ENCODE measurements at regions of chr3 and their contacts with region 1.

Region 1: DNA sequence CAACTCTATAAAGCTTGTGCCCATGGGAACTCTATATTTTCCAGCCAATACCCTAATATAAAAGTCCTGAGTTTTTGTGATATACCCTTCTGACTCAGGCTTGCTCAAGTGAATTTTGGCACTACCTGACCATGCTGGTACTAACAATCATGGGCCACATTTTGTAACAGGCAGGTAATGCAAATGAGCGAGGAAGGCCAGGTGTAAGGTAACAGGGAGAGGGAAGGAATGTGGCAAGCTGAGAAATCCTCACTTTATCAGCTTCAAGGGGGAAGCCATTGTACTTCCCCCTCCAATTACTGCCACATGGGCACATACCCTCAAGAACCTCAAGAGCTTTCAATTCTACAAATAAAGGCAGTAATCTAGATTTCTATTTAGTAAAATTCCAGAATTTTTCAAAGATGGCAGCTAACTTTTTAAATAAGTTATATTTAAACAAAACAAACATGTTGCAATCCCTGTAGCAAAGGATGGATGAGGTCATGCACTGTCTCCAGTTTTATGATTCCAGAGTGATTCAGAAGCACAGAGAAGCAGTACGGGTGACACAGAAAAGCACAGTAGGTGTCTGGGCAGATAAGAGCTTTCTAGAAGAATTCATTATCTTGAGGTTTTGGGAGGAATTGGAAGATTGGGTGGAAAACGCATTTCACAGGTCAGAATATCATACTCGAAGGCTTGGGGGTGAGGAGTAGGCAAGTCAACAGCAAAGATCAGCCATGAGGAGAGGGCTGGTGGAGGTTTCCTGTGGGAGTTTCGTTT is 87.6 kb downstream of the FOXP1 start:
- DNase-seq: peak in 2 of 35 experiments; percentile 7 to 61
- ATAC-seq: peak in 1 of 4 experiments; percentile 33
- H3K4me3 ChIP-seq: peak overlapping the region in 1 of 2 donors; percentile 27
- H3K4me3 Mint-ChIP-seq: peak overlapping the region; percentile 61 to 74 (median 69)
- H3K27ac ChIP-seq: peak overlapping the region; percentile 98
- H3K27ac Mint-ChIP-seq: peak overlapping the region; percentile 92 to 98
- H3K4me1 ChIP-seq: peaks cover 46 to 58% of the 10 kb centered on the region in 2 experiments
- H3K4me1 Mint-ChIP-seq: peaks cover 86 to 89% (median 86%) of the 10 kb centered on the region in 3 donors
- H3K27me3 ChIP-seq: no peaks in the 10 kb centered on the region
- H3K27me3 Mint-ChIP-seq: no peaks in the 10 kb centered on the region

Region 2: GRCh38 chr3:70646628-70647027 is 849.3 kb before region 1 on chr3:
- CTCF ChIA-PET with region 1: no interaction called
- POLR2A ChIA-PET with region 1: no interaction called
- DNase-seq: no peak
- ATAC-seq: no peak
- H3K4me3 ChIP-seq: no peak overlapping the region
- H3K4me3 Mint-ChIP-seq: no peak overlapping the region
- H3K27ac ChIP-seq: no peak overlapping the region
- H3K27ac Mint-ChIP-seq: no peak overlapping the region
- H3K4me1 ChIP-seq: no peaks in the 10 kb centered on the region
- H3K4me1 Mint-ChIP-seq: no peaks in the 10 kb centered on the region
- H3K27me3 ChIP-seq: no peaks in the 10 kb centered on the region
- H3K27me3 Mint-ChIP-seq: peaks cover 11 to 34% of the 10 kb centered on the region in 2 donors

Region 3: GRCh38 chr3:71258116-71258515 is 237.8 kb before region 1 on chr3:
- CTCF ChIA-PET with region 1: no interaction called
- POLR2A ChIA-PET with region 1: no interaction called
- DNase-seq: no peak
- ATAC-seq: peak in 3 of 4 experiments; percentile 9 to 43 (median 33)
- H3K4me3 ChIP-seq: no peak overlapping the region
- H3K4me3 Mint-ChIP-seq: peak overlapping the region in 1 of 3 donors; percentile 33
- H3K27ac ChIP-seq: no peak overlapping the region
- H3K27ac Mint-ChIP-seq: peak overlapping the region; percentile 7 to 13
- H3K4me1 ChIP-seq: peaks cover 0 to 12% of the 10 kb centered on the region in 2 experiments
- H3K4me1 Mint-ChIP-seq: peaks cover 65 to 76% (median 73%) of the 10 kb centered on the region in 3 donors
- H3K27me3 ChIP-seq: no peaks in the 10 kb centered on the region
- H3K27me3 Mint-ChIP-seq: no peaks in the 10 kb centered on the region

Region 4: DNA sequence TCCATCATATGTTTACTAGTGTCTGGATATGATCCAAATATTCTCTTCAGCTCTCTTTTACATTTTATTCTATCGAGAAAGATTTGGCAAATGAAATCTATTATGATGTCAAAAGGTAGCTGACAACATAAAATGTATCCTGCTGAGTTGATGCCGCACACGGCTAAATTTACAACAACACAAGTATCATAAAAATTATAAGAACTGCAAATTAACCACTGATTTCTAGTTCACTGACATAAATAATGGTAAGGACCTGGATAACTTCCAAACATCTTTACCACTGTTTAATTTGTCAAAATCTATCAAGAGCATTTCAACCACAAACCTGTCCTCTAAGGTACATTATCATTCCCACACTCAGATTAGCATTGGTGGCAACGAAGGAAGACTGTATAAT is 156.8 kb before region 1 on chr3:
- CTCF ChIA-PET with region 1: interaction called in 1 of 2 experiments, 3 read pairs
- POLR2A ChIA-PET with region 1: interaction called in 1 of 2 experiments, 10 read pairs
- DNase-seq: no peak
- ATAC-seq: no peak
- H3K4me3 ChIP-seq: no peak overlapping the region
- H3K4me3 Mint-ChIP-seq: no peak overlapping the region
- H3K27ac ChIP-seq: no peak overlapping the region
- H3K27ac Mint-ChIP-seq: peak overlapping the region; percentile 25 to 50
- H3K4me1 ChIP-seq: peaks cover 0 to 3% of the 10 kb centered on the region in 2 experiments
- H3K4me1 Mint-ChIP-seq: peaks cover 43 to 60% (median 52%) of the 10 kb centered on the region in 3 donors
- H3K27me3 ChIP-seq: no peaks in the 10 kb centered on the region
- H3K27me3 Mint-ChIP-seq: no peaks in the 10 kb centered on the region

Region 5: GRCh38 chr3:71444028-71444860 is 51.6 kb before region 1 on chr3:
- CTCF ChIA-PET with region 1: interaction called, 3 read pairs
- POLR2A ChIA-PET with region 1: interaction called, 4 to 12 read pairs
- DNase-seq: peak; percentile 62 to 91 (median 77)
- ATAC-seq: peak; percentile 82 to 88 (median 86)
- H3K4me3 ChIP-seq: peak overlapping the region in 1 of 2 donors; percentile 44
- H3K4me3 Mint-ChIP-seq: peak overlapping the region; percentile 69 to 75 (median 70)
- H3K27ac ChIP-seq: peak overlapping the region; percentile 94
- H3K27ac Mint-ChIP-seq: peak overlapping the region; percentile 97 to 99
- H3K4me1 ChIP-seq: peaks cover 86 to 95% of the 10 kb centered on the region in 2 experiments
- H3K4me1 Mint-ChIP-seq: peaks cover 96 to 100% (median 96%) of the 10 kb centered on the region in 3 donors
- H3K27me3 ChIP-seq: no peaks in the 10 kb centered on the region
- H3K27me3 Mint-ChIP-seq: no peaks in the 10 kb centered on the region

Region 6: DNA sequence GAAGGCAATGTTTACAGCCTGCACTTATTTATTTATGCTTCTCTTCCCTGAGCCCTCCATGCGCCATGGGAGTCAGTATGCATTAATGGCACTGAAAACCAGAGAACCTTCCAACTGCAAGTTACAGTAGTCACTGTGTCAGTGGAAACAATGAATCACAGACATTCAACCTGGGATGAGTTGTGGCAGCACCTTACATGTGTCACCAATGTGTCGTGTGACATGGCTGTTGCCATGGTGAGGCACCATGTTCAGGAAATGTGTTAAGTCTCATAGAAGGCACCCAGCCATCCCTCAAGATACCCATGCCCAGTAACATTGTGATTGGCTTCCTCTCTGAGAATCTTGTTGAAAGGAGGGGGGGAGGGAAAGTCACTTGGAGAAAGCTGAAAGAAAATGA is 17.3 kb before region 1 on chr3:
- CTCF ChIA-PET with region 1: interaction called, 3 to 6 read pairs
- POLR2A ChIA-PET with region 1: interaction called, 7 to 10 read pairs
- DNase-seq: peak in 19 of 35 experiments; percentile 14 to 67 (median 39)
- ATAC-seq: peak; percentile 74 to 87 (median 80)
- H3K4me3 ChIP-seq: no peak overlapping the region
- H3K4me3 Mint-ChIP-seq: peak overlapping the region in 2 of 3 donors; percentile 71 to 77
- H3K27ac ChIP-seq: no peak overlapping the region
- H3K27ac Mint-ChIP-seq: peak overlapping the region; percentile 82 to 99
- H3K4me1 ChIP-seq: peaks cover 21 to 41% of the 10 kb centered on the region in 2 experiments
- H3K4me1 Mint-ChIP-seq: peaks cover 84 to 92% (median 87%) of the 10 kb centered on the region in 3 donors
- H3K27me3 ChIP-seq: no peaks in the 10 kb centered on the region
- H3K27me3 Mint-ChIP-seq: no peaks in the 10 kb centered on the region

Region 7: DNA sequence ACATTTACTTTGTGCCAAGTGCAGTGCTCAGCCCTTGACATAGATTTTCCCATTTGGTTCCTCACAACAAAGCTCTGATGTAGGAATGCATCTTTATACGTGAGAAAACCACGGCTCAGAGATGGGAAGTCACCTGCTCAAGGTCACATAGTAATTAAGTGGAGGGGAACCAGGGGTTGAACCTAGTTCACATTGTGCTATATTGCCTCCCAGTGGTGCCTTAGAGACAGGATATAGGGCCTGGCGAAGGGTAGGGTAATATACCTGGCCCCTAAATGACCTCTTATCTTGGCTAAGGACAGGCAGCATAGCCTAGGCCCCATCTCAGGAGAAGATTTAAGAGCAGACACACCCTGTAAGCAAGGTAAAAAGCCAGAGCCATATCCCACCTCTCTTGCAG is 16.1 kb after region 1 on chr3:
- CTCF ChIA-PET with region 1: interaction called, 5 to 14 read pairs
- POLR2A ChIA-PET with region 1: interaction called in 1 of 2 experiments, 5 read pairs
- DNase-seq: peak in 32 of 35 experiments; percentile 5 to 83 (median 43)
- ATAC-seq: peak; percentile 94 to 100 (median 98)
- H3K4me3 ChIP-seq: no peak overlapping the region
- H3K4me3 Mint-ChIP-seq: peak overlapping the region in 1 of 3 donors; percentile 25
- H3K27ac ChIP-seq: peak overlapping the region; percentile 32
- H3K27ac Mint-ChIP-seq: peak overlapping the region; percentile 56 to 75
- H3K4me1 ChIP-seq: peaks cover 16 to 17% of the 10 kb centered on the region in 2 experiments
- H3K4me1 Mint-ChIP-seq: peaks cover 10 to 47% (median 16%) of the 10 kb centered on the region in 3 donors
- H3K27me3 ChIP-seq: no peaks in the 10 kb centered on the region
- H3K27me3 Mint-ChIP-seq: no peaks in the 10 kb centered on the region

Region 8: GRCh38 chr3:71528816-71529215 is 32.9 kb after region 1 on chr3:
- CTCF ChIA-PET with region 1: interaction called in 1 of 2 experiments, 3 read pairs
- POLR2A ChIA-PET with region 1: interaction called in 1 of 2 experiments, 10 read pairs
- DNase-seq: no peak
- ATAC-seq: peak in 2 of 4 experiments; percentile 41 to 43
- H3K4me3 ChIP-seq: no peak overlapping the region
- H3K4me3 Mint-ChIP-seq: no peak overlapping the region
- H3K27ac ChIP-seq: no peak overlapping the region
- H3K27ac Mint-ChIP-seq: no peak overlapping the region
- H3K4me1 ChIP-seq: no peaks in the 10 kb centered on the region
- H3K4me1 Mint-ChIP-seq: peaks cover 13 to 27% (median 18%) of the 10 kb centered on the region in 3 donors
- H3K27me3 ChIP-seq: no peaks in the 10 kb centered on the region
- H3K27me3 Mint-ChIP-seq: no peaks in the 10 kb centered on the region

Region 9: DNA sequence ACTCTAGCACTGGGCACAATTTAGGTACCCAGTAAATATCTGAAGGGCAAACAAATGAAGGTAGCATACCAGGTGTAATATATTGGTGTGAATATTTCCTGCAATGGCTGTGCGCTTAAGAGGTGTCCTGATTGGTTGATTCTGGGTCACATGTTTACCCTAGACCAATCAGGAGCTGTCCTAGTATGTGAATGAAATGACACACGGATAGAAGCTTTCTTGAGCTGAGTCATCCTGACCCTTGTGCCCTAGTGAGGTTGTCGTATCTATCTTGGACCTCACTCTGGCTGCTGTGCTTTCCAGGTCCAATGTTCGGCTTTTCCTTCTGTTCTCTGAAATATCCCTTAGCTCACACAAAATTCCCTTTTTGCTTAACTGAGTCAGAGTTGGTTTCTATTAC is 145.8 kb after region 1 on chr3:
- CTCF ChIA-PET with region 1: no interaction called
- POLR2A ChIA-PET with region 1: no interaction called
- DNase-seq: no peak
- ATAC-seq: no peak
- H3K4me3 ChIP-seq: no peak overlapping the region
- H3K4me3 Mint-ChIP-seq: no peak overlapping the region
- H3K27ac ChIP-seq: no peak overlapping the region
- H3K27ac Mint-ChIP-seq: no peak overlapping the region
- H3K4me1 ChIP-seq: no peaks in the 10 kb centered on the region
- H3K4me1 Mint-ChIP-seq: peaks cover 0 to 7% (median 0%) of the 10 kb centered on the region in 3 donors
- H3K27me3 ChIP-seq: no peaks in the 10 kb centered on the region
- H3K27me3 Mint-ChIP-seq: no peaks in the 10 kb centered on the region

Measured in T-cell (primary cell).